Stomach (tissue), 19 donors: ENCODE measurements at regions of chr11 and their contacts with region 1.

Region 1: DNA sequence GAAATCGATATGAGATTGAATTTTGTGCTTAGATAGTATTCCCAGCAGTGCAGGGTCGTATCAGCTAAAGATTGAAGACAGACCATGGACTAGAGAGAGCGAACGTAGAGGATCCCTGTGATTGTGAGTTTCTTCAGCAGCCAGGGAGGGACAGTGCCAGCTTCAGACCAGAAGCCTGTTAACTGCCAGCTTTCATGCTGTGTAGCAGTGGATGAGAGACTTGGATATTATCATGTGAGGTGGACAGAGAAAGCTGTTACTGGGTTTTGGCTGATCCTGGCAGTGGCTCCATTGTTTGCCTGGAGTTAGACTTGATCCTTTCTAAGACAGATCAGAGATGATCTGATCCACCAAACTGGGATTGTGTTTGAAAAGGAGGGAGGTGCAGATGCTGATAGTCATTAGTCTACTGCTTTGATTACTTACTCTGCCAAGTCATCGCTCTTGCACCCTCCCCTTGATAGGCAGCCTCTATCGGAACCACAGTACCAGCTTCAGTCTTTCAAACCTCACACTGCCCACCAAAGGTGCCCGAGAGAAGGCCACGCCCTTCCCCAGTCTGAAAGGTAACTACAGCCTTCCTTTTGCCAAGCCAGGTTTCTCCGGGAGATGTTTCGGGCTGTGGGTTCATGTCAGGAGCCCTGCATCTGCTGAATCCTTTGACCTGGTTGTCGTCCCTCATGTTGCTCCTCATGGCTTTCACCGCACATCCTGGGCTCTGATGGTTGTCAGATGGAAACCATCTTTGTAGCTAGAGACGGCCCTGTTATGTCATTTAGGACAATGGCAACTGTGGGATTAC is 16.2 kb downstream of the MADD start:
- DNase-seq: no peak
- H3K4me3 ChIP-seq: no peak overlapping the region
- H3K27ac ChIP-seq: no peak overlapping the region
- H3K4me1 ChIP-seq: no peaks in the 10 kb centered on the region
- H3K27me3 ChIP-seq: no peaks in the 10 kb centered on the region
- CTCF ChIP-seq: no peak
- EP300 ChIP-seq: no peak
- POLR2A ChIP-seq: no peak

Region 2: DNA sequence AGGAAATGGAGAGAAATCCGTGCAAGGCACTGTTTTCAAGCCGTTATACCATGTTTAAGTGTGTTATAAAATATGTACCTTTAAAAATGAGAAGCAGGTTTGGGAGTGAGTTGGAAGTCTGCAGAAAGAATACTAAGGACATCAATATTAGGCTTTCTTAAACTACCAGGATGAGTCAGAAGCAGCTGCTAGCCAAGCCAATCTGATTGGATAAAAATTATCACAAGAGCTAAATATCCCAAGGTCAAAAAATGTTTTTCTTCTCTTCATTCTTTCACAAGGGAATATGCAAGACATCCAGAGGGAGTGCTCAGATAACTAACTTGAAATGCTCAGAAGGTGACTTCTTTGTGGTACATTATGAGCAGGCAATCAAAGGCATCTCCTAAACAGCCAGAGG is 420.8 kb before region 1 on chr11:
- intact Hi-C with region 1: loop called (anchors 10 kb)
- DNase-seq: no peak
- H3K4me3 ChIP-seq: no peak overlapping the region
- H3K27ac ChIP-seq: no peak overlapping the region
- H3K4me1 ChIP-seq: no peaks in the 10 kb centered on the region
- H3K27me3 ChIP-seq: no peaks in the 10 kb centered on the region
- CTCF ChIP-seq: no peak
- EP300 ChIP-seq: no peak
- POLR2A ChIP-seq: no peak

Region 3: GRCh38 chr11:47407746-47408590 is 121.8 kb after region 1 on chr11 and contains the start of gene SLC39A13:
- intact Hi-C with region 1: no loop called
- DNase-seq: peak; percentile 95 to 98
- H3K4me3 ChIP-seq: peak within 1 kb of the TSS; percentile 74 to 85 (median 77)
- H3K27ac ChIP-seq: peak within 1 kb of the TSS; percentile 93 to 97 (median 95)
- H3K4me1 ChIP-seq: peaks cover 27 to 50% (median 39%) of the 10 kb centered on the region in 4 donors
- H3K27me3 ChIP-seq: no peaks in the 10 kb centered on the region
- CTCF ChIP-seq: peak in 5 of 7 experiments; percentile 38 to 88 (median 71)
- EP300 ChIP-seq: no peak
- POLR2A ChIP-seq: peak in 1 of 4 donors; percentile 56
- total RNA-seq, gene SLC39A13: 7.0 to 158 (median 24.8) TPM